ENCODE measurements at regions of chr5 and their contacts with region 1.

Region 1: DNA sequence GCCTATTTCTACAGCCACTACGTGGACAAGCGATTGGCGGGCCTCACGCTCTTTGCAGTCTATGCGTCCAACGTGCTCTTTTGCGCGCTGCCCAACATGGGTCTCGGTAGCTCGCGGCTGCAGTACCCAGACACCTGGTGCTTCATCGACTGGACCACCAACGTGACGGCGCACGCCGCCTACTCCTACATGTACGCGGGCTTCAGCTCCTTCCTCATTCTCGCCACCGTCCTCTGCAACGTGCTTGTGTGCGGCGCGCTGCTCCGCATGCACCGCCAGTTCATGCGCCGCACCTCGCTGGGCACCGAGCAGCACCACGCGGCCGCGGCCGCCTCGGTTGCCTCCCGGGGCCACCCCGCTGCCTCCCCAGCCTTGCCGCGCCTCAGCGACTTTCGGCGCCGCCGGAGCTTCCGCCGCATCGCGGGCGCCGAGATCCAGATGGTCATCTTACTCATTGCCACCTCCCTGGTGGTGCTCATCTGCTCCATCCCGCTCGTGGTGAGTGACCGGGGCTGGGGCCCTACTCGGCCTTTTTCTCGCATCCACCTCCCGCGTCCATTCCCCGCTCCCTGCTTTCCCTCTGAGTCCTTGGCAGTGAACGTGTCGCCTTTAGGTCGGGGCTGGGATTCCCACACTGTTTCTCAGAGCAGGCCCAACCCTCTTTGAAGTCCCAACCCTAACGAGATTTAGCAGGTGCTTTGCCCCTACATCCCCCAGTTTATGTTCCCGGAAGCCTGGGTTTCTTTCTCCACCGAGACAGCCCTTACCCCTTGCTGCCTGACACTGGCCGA is 1.8 kb downstream of the PTGER4 start:
- DNase-seq: peak; percentile 85

Region 2: DNA sequence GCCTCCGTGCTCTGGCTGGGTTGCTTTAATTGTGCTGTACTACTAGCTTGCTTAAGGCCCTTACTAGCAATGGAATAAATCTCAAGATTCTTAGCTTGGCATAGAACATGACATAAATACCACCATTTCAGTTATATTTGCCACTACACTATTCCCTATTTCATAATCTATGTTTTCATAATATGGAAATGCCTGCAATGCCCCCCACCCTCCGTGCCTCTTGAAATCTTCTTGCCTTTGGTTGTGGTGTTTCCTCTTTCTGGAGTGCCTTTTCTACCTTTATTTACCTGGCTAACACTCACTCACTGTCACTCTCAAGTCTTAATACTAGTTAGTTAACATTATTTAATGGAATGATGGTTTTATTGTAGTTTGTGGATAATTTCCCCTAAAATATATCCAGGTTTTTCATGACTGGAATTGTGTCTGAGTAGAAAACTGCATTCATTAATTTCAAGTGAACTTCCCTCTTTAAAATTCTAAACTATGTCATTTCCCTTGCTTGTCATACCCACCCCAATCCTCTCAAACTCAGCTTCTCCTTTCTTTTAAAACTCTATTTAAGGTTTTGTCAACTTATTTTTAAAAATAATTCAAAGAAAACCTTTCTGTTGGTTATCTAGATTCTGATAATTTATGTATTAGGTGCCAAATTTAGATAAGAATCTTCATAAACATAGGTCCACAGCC is 735.1 kb before region 1 on chr5:
- intact Hi-C with region 1: loop called in 1 of 2 experiments (anchors 1 kb)
- DNase-seq: no peak